ENCODE measurements at regions of chrX and their contacts with region 1.

Region 1: DNA sequence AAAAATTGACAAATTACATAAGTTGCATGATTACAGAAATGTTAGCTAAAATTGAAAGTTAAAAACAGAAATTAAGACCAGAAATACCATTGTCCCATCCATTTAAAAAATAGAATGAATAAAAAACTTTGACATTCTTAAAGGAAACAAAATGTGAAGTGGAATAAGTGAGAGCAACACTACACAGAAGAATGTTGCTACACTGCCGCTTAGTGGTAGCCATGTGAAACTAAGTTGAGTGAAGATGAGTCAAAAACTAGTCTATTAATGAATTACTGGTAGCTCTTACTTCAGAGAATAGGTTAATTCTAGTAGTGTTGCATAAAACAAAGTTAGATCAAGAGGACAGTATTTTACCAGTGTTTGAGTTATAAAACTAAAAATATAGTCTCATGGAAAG is 571.0 kb upstream of the KLHL4 start:
- DNase-seq: peak; percentile 3
- H3K4me3 Mint-ChIP-seq: no peak overlapping the region
- H3K27ac Mint-ChIP-seq: no peak overlapping the region
- H3K4me1 Mint-ChIP-seq: no peaks in the 10 kb centered on the region
- H3K27me3 Mint-ChIP-seq: no peaks in the 10 kb centered on the region
- CTCF ChIP-seq: no peak

Region 2: GRCh38 chrX:85851418-85851817 is 1095.2 kb before region 1 on chrX:
- CTCF ChIA-PET with region 1: no interaction called
- intact Hi-C with region 1: loop called (anchors 5 kb)
- DNase-seq: peak; percentile 52
- H3K4me3 Mint-ChIP-seq: no peak overlapping the region
- H3K27ac Mint-ChIP-seq: no peak overlapping the region
- H3K4me1 Mint-ChIP-seq: no peaks in the 10 kb centered on the region
- H3K27me3 Mint-ChIP-seq: no peaks in the 10 kb centered on the region
- CTCF ChIP-seq: peak; percentile 31

Region 3: GRCh38 chrX:86806788-86807187 is 139.8 kb before region 1 on chrX:
- CTCF ChIA-PET with region 1: no interaction called
- intact Hi-C with region 1: loop called (anchors 10 kb)
- DNase-seq: peak; percentile 0
- H3K4me3 Mint-ChIP-seq: no peak overlapping the region
- H3K27ac Mint-ChIP-seq: no peak overlapping the region
- H3K4me1 Mint-ChIP-seq: no peaks in the 10 kb centered on the region
- H3K27me3 Mint-ChIP-seq: no peaks in the 10 kb centered on the region
- CTCF ChIP-seq: no peak

Region 4: DNA sequence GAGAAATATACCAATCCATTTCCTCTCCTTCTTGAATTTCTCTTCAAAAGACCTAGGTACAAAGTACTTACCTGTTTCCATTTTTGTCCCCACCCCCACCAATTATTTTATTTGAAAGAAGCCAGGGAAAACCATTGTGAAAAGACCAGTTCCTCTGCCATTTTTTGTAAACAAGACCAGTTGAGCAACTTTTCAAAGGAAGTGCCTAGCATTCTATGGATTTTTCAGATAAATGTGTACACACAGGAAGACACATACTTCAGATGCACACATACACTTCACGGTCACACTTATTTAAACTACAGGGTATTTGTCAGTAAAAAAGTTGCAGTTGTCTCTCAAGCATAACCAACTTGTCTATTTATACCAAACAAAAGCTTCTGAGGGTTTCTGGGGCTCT is 16.2 kb before region 1 on chrX:
- CTCF ChIA-PET with region 1: no interaction called
- intact Hi-C with region 1: no loop called
- DNase-seq: no peak
- H3K4me3 Mint-ChIP-seq: no peak overlapping the region
- H3K27ac Mint-ChIP-seq: no peak overlapping the region
- H3K4me1 Mint-ChIP-seq: no peaks in the 10 kb centered on the region
- H3K27me3 Mint-ChIP-seq: no peaks in the 10 kb centered on the region
- CTCF ChIP-seq: no peak

Region 5: DNA sequence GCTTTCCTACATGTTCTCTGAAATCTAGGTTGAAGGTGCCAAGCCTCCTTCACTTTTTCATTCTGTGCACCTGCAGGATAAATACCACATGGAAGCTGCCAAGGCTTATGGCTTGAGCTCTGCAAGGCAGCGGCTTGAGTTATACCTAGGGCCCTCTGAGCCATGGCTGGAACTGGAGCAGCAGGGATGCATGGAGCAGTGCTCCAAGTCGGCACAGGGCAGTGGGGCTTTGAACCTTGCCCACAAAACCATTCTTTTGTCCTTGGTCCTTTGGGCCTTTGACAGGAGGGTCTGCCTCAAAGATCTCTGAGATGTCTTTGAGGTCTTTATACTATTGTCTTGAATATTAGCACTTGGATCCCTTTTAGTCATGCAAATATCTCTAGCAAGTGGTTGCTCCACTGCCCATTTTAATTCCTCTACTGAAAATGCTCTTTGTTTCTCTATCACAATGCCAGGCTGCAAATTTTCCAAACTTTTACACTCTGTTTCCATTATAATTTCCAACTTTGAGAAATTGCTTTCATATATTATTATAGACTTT is 34.8 kb after region 1 on chrX:
- CTCF ChIA-PET with region 1: no interaction called
- intact Hi-C with region 1: no loop called
- DNase-seq: no peak
- H3K4me3 Mint-ChIP-seq: no peak overlapping the region
- H3K27ac Mint-ChIP-seq: no peak overlapping the region
- H3K4me1 Mint-ChIP-seq: no peaks in the 10 kb centered on the region
- H3K27me3 Mint-ChIP-seq: no peaks in the 10 kb centered on the region
- CTCF ChIP-seq: no peak